Common myeloid progenitor, CD34-positive (primary cell): ENCODE measurements at regions of chr10 and their contacts with region 1.

Region 1: GRCh38 chr10:95279042-95279820 is 11.6 kb downstream of the PDLIM1 start:
- DNase-seq: no peak
- H3K4me3 ChIP-seq: no peak overlapping the region
- H3K27ac ChIP-seq: no peak overlapping the region
- H3K4me1 ChIP-seq: peaks cover 0 to 12% (median 3%) of the 10 kb centered on the region in 4 experiments
- H3K27me3 ChIP-seq: no peaks in the 10 kb centered on the region

Region 2: GRCh38 chr10:95236068-95236903 is 42.9 kb before region 1 on chr10:
- CTCF ChIA-PET with region 1: no interaction called
- POLR2A ChIA-PET with region 1: no interaction called
- DNase-seq: peak in 1 of 3 donors; percentile 25
- H3K4me3 ChIP-seq: no peak overlapping the region
- H3K27ac ChIP-seq: no peak overlapping the region
- H3K4me1 ChIP-seq: peaks cover 0 to 2% (median 0%) of the 10 kb centered on the region in 4 experiments
- H3K27me3 ChIP-seq: no peaks in the 10 kb centered on the region

Region 3: GRCh38 chr10:95289003-95289920 is 10.0 kb after region 1 on chr10:
- CTCF ChIA-PET with region 1: interaction called, 10 read pairs
- POLR2A ChIA-PET with region 1: no interaction called
- DNase-seq: no peak
- H3K4me3 ChIP-seq: peak overlapping the region in 3 of 7 experiments; percentile 65 to 85 (median 76)
- H3K27ac ChIP-seq: no peak overlapping the region
- H3K4me1 ChIP-seq: peaks cover 0 to 20% (median 11%) of the 10 kb centered on the region in 4 experiments
- H3K27me3 ChIP-seq: no peaks in the 10 kb centered on the region

Region 4: GRCh38 chr10:95300022-95300539 is 20.9 kb after region 1 on chr10:
- CTCF ChIA-PET with region 1: no interaction called
- POLR2A ChIA-PET with region 1: no interaction called
- DNase-seq: no peak
- H3K4me3 ChIP-seq: no peak overlapping the region
- H3K27ac ChIP-seq: no peak overlapping the region
- H3K4me1 ChIP-seq: peaks cover 0 to 26% (median 21%) of the 10 kb centered on the region in 4 experiments
- H3K27me3 ChIP-seq: no peaks in the 10 kb centered on the region